GM10248 (cell line): ENCODE measurements at regions of chr2 and their contacts with region 1.

Region 1: DNA sequence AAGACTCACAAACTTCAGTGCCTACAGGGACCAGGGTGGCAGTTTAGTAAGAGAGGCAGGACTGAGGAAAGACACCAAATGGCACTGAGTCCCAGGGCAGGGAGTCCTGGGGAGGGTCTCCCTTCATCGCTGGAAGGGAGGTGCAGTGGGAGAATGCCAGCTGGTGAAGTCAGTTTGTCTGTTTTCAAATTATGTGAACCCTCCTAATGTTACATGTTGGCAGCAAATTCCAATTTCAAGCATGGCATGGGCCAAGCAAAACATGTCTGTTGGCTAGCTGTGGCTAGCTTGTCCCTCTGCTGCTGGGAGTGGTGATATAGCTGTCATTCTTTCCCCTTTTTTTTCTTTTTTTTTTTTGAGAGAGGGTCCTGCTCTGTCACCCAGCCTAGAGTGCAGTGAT is 55.9 kb upstream of the HAAO start:
- DNase-seq: no peak
- CTCF ChIP-seq: no peak

Region 2: DNA sequence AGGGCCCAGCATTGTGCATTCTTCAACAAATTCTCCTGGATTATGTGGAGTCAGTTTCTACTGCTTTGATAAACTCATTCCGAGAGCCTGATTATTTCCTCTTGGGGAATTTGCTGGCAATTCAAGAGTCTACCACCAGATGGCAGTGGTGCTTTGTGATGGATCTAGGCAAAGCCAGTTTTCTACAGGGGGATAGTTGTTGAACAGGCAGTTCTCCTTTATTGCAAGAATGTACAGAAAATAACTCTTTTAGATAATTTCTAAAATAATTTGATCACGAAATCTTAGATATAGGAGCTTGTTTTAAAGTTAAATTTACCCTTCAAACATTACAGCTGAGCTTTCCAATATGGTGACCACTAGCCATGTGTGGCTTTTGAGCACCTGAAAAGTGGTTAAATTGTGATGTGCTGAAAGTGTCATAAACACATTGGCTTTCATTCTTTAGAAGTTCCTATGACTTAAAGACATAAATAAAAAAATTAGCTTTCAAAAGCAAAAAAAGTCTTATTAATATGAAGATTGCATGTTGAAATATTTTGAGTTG is 10.8 kb after region 1 on chr2:
- CTCF ChIA-PET with region 1: interaction called, 13 read pairs
- POLR2A ChIA-PET with region 1: no interaction called
- DNase-seq: peak; percentile 72
- CTCF ChIP-seq: peak; percentile 81